ENCODE measurements at regions of chr2 and their contacts with region 1.

Region 1: GRCh38 chr2:153077311-153077710 is 358.9 kb downstream of the ARL6IP6 start:
- DNase-seq: no peak
- ATAC-seq: no peak
- H3K4me3 ChIP-seq: no peak overlapping the region
- H3K4me3 Mint-ChIP-seq: no peak overlapping the region
- H3K27ac ChIP-seq: no peak overlapping the region
- H3K27ac Mint-ChIP-seq: no peak overlapping the region
- H3K4me1 ChIP-seq: no peaks in the 10 kb centered on the region
- H3K4me1 Mint-ChIP-seq: no peaks in the 10 kb centered on the region
- H3K27me3 ChIP-seq: no peaks in the 10 kb centered on the region
- H3K27me3 Mint-ChIP-seq: no peaks in the 10 kb centered on the region
- CTCF ChIP-seq: no peak

Region 2: DNA sequence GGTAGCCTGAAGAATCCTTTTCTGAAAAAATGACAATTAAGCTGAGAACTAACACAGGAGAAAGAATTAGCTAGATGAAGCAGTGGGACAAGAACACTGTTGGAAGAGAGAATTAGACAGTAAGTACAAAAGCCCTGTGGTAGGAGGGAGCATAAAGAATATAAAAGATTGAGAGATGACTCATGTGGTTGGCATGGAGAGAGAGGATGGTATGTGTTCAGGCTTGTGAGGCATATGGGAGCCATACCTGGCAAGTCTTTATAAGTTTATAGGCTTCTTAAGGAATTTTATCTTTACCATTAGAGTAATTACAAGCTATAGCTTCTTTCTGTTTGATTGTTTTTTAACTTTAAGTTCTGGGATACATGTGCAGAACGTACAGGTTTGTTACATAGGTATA is 33.9 kb before region 1 on chr2:
- CTCF ChIA-PET with region 1: no interaction called
- POLR2A ChIA-PET with region 1: no interaction called
- intact Hi-C with region 1: loop called in 1 of 2 experiments (anchors 1 kb)
- DNase-seq: no peak
- ATAC-seq: no peak
- H3K4me3 ChIP-seq: no peak overlapping the region
- H3K4me3 Mint-ChIP-seq: no peak overlapping the region
- H3K27ac ChIP-seq: no peak overlapping the region
- H3K27ac Mint-ChIP-seq: no peak overlapping the region
- H3K4me1 ChIP-seq: no peaks in the 10 kb centered on the region
- H3K4me1 Mint-ChIP-seq: no peaks in the 10 kb centered on the region
- H3K27me3 ChIP-seq: no peaks in the 10 kb centered on the region
- H3K27me3 Mint-ChIP-seq: no peaks in the 10 kb centered on the region
- CTCF ChIP-seq: no peak